ENCODE measurements at regions of chr19 and their contacts with region 1.

Region 1: GRCh38 chr19:16910750-16911445 is 22.1 kb downstream of the F2RL3 start:
- DNase-seq: no peak
- H3K4me3 ChIP-seq: no peak overlapping the region
- H3K27ac ChIP-seq: no peak overlapping the region
- H3K4me1 ChIP-seq: no peaks in the 10 kb centered on the region
- H3K27me3 ChIP-seq: no peaks in the 10 kb centered on the region
- CTCF ChIP-seq: no peak
- POLR2A ChIP-seq: no peak

Region 2: GRCh38 chr19:16751733-16752132 is 159.2 kb before region 1 on chr19:
- intact Hi-C with region 1: loop called (anchors 10 kb)
- DNase-seq: no peak
- H3K4me3 ChIP-seq: no peak overlapping the region
- H3K27ac ChIP-seq: no peak overlapping the region
- H3K4me1 ChIP-seq: no peaks in the 10 kb centered on the region
- H3K27me3 ChIP-seq: no peaks in the 10 kb centered on the region
- CTCF ChIP-seq: no peak
- POLR2A ChIP-seq: no peak

Region 3: GRCh38 chr19:16791960-16792359 is 118.9 kb before region 1 on chr19:
- intact Hi-C with region 1: no loop called
- DNase-seq: no peak
- H3K4me3 ChIP-seq: no peak overlapping the region
- H3K27ac ChIP-seq: no peak overlapping the region
- H3K4me1 ChIP-seq: no peaks in the 10 kb centered on the region
- H3K27me3 ChIP-seq: no peaks in the 10 kb centered on the region
- CTCF ChIP-seq: no peak
- POLR2A ChIP-seq: no peak

Measured in vagina (tissue), 2 donors.